Activated CD8-positive, alpha-beta memory T cell treated with anti-CD3 and anti-CD28 coated beads, Interleukin-2, amount 10 ng/mL, durations not matched to agents 7 days and 5 days (primary cell): ENCODE measurements at regions of chr10 and their contacts with region 1.

Region 1: GRCh38 chr10:104308439-104308903 is 29.8 kb downstream of the ITPRIP start:
- DNase-seq: peak; percentile 57
- ATAC-seq: peak; percentile 59
- H3K4me3 Mint-ChIP-seq: no peak overlapping the region
- H3K27ac Mint-ChIP-seq: peak overlapping the region; percentile 69
- H3K4me1 Mint-ChIP-seq: peaks cover 39% of the 10 kb centered on the region
- H3K27me3 Mint-ChIP-seq: no peaks in the 10 kb centered on the region

Region 2: GRCh38 chr10:104080762-104081161 is 227.7 kb before region 1 on chr10:
- CTCF ChIA-PET with region 1: no interaction called
- DNase-seq: no peak
- ATAC-seq: peak; percentile 49
- H3K4me3 Mint-ChIP-seq: no peak overlapping the region
- H3K27ac Mint-ChIP-seq: no peak overlapping the region
- H3K4me1 Mint-ChIP-seq: no peaks in the 10 kb centered on the region
- H3K27me3 Mint-ChIP-seq: no peaks in the 10 kb centered on the region

Region 3: DNA sequence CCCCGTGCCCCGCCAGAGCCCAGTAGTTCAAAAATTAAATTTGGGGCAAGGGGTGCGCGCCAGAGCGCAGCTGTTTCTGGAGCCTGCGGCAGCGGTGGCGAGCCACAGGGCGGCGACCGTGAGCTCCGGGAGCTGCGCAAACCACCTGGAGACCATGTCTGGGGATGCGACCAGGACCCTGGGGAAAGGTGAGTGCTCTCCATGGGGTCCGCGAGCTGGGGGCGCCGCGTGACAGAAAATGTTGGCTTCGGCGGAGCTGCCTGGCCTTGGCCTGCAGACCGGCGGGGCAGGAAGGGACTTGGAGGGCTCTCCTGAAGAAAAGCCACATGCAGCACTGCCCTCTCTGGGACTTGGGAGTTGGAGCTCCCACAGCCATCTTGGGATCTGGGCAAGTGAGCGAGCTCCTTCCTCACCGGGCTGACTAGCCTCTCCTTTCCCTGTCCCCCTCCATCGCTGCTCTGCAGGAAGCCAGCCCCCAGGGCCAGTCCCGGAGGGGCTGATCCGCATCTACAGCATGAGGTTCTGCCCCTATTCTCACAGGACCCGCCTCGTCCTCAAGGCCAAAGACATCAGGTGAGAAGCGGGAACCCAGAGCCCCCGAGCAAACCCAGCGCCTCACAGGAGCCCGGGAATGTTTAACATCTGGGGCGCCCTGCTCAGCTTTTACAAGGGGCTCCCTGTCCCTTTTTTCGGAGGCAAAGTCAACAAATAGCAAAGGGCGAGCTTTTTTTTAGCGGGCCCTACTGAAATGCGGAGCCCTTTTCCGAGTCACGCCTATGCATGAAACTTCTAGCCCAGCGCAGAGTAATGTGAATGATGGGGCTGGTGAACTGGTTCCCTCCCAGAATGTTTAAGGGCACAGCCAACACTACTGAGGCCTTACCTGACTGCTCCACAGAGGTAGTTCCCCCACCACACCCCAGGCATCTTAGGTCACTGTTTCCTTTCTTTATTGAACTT is 33.4 kb before region 1 on chr10:
- CTCF ChIA-PET with region 1: interaction called, 26 read pairs
- DNase-seq: peak; percentile 53
- ATAC-seq: peak; percentile 80
- H3K4me3 Mint-ChIP-seq: peak overlapping the region; percentile 52
- H3K27ac Mint-ChIP-seq: no peak overlapping the region
- H3K4me1 Mint-ChIP-seq: peaks cover 7% of the 10 kb centered on the region
- H3K27me3 Mint-ChIP-seq: peaks cover 24% of the 10 kb centered on the region

Region 4: GRCh38 chr10:104322416-104322782 is 13.9 kb after region 1 on chr10:
- CTCF ChIA-PET with region 1: interaction called, 35 read pairs
- DNase-seq: peak; percentile 74
- ATAC-seq: peak; percentile 69
- H3K4me3 Mint-ChIP-seq: peak overlapping the region; percentile 45
- H3K27ac Mint-ChIP-seq: peak overlapping the region; percentile 84
- H3K4me1 Mint-ChIP-seq: peaks cover 66% of the 10 kb centered on the region
- H3K27me3 Mint-ChIP-seq: no peaks in the 10 kb centered on the region

Region 5: GRCh38 chr10:104337974-104338735 is 29.7 kb after region 1 on chr10 and contains the start of gene ITPRIP:
- CTCF ChIA-PET with region 1: interaction called, 24 read pairs
- DNase-seq: peak; percentile 84
- ATAC-seq: peak; percentile 80
- H3K4me3 Mint-ChIP-seq: peak within 1 kb of the TSS; percentile 95
- H3K27ac Mint-ChIP-seq: peak within 1 kb of the TSS; percentile 100
- H3K4me1 Mint-ChIP-seq: peaks cover 50% of the 10 kb centered on the region
- H3K27me3 Mint-ChIP-seq: peaks cover 9% of the 10 kb centered on the region
- total RNA-seq, gene ITPRIP: 21.6 to 21.9 TPM